ENCODE measurements at regions of chr11 and their contacts with region 1.

Region 1: DNA sequence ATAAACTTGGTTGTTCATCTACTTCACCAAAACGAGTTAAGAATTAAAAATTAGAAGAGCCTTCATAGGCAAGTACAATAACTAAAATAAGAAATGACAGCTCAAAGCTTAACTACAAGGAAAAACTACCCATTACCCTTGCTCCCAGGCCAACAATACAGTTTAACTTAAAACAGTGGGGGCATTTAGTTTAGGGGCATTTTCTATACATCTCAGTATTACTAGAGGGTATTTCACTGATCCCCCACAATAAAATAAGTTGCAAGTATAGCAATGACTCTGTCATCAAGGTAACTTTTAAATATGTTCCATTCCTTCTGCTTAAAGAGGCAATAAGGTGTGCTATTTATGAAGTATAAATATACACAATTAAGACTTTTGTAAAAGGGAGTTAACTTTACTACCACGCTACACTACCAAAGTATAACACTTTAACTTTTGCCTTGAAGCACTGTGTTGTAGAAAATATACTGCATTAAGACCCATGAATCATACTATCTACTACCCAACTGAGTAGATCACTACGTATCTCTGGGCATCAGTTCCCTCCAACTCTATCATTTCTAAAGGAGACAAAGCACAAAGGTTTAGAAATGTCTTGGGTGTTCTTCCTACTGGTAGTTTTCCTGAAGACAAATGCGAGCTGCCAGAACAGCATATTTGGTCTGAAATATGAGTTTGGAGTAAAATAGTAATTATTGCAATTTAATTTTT is 29.8 kb downstream of the CHORDC1 start:
- DNase-seq: no peak
- H3K4me3 Mint-ChIP-seq: no peak overlapping the region
- H3K27ac Mint-ChIP-seq: no peak overlapping the region
- H3K4me1 Mint-ChIP-seq: no peaks in the 10 kb centered on the region
- H3K27me3 Mint-ChIP-seq: no peaks in the 10 kb centered on the region

Region 2: GRCh38 chr11:90229791-90230190 is 36.8 kb after region 1 on chr11:
- intact Hi-C with region 1: loop called (anchors 5 kb)
- DNase-seq: no peak
- H3K4me3 Mint-ChIP-seq: no peak overlapping the region
- H3K27ac Mint-ChIP-seq: no peak overlapping the region
- H3K4me1 Mint-ChIP-seq: no peaks in the 10 kb centered on the region
- H3K27me3 Mint-ChIP-seq: peaks cover 21% of the 10 kb centered on the region

Region 3: DNA sequence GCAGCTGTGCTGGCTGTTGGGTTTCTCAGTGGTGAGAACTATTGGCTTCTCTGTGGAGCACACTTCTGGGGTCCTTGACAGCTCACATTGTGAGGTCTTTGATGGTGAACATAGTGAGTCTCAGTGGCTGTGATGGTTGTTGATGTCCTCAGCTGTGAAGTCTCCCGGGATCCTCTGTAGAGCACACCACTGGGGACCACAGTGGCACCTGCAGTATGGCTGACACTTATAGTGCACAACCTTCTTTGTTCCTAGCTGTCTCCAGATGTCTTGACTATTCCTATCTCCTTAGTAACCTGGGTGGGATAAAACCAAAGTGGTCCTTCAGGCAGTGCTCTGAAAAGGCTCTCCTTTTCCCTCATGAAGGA is 64.1 kb after region 1 on chr11:
- intact Hi-C with region 1: no loop called
- DNase-seq: no peak
- H3K4me3 Mint-ChIP-seq: no peak overlapping the region
- H3K27ac Mint-ChIP-seq: no peak overlapping the region
- H3K4me1 Mint-ChIP-seq: peaks cover 3% of the 10 kb centered on the region
- H3K27me3 Mint-ChIP-seq: peaks cover 2% of the 10 kb centered on the region

Region 4: GRCh38 chr11:90332415-90332814 is 139.4 kb after region 1 on chr11:
- intact Hi-C with region 1: no loop called
- DNase-seq: no peak
- H3K4me3 Mint-ChIP-seq: no peak overlapping the region
- H3K27ac Mint-ChIP-seq: no peak overlapping the region
- H3K4me1 Mint-ChIP-seq: no peaks in the 10 kb centered on the region
- H3K27me3 Mint-ChIP-seq: no peaks in the 10 kb centered on the region